Activated T-helper 2 cell treated with anti-CD3 and anti-CD28 coated beads, Interferon-gamma antibody, Interleukin-2, Interleukin-4, amounts not matched to agents 10 μg/mL and 5 μg/mL and 100 μg/mL, durations not matched to agents 14 hours and 24 hours and 36 hours (primary cell): ENCODE measurements at regions of chr11 and their contacts with region 1.

Region 1: GRCh38 chr11:93039531-93040240 is 70.2 kb downstream of the MTNR1B start:
- DNase-seq: no peak
- H3K4me3 Mint-ChIP-seq: no peak overlapping the region
- H3K27ac Mint-ChIP-seq: no peak overlapping the region
- H3K4me1 Mint-ChIP-seq: peaks cover 2% of the 10 kb centered on the region
- H3K27me3 Mint-ChIP-seq: no peaks in the 10 kb centered on the region

Region 2: DNA sequence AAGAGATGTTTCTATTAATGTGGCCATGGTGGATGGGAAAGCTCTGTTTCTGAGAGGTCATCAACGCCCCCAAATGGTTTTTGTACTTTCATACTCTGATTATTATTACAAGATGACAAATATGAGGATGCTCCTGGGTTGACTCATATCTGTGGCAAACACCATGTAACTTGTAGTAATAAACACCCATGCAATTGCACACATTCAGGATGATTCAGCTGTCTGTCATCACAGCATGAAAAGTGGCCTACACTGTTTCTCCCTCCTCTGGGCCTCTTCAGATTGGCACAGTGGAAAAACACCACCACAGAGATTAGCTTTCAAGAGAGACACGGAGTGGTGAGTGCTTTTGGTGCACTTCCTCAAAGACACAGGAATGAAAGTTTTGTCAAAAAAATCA is 15.2 kb after region 1 on chr11:
- intact Hi-C with region 1: loop called (anchors 2 kb)
- DNase-seq: no peak
- H3K4me3 Mint-ChIP-seq: no peak overlapping the region
- H3K27ac Mint-ChIP-seq: peak overlapping the region; percentile 15
- H3K4me1 Mint-ChIP-seq: peaks cover 6% of the 10 kb centered on the region
- H3K27me3 Mint-ChIP-seq: peaks cover 3% of the 10 kb centered on the region